ENCODE measurements at regions of chr10 and their contacts with region 1.

Region 1: GRCh38 chr10:102225646-102226541 is at the start of gene ELOVL3:
- DNase-seq: peak; percentile 96
- ATAC-seq: peak; percentile 92
- H3K4me3 Mint-ChIP-seq: peak within 1 kb of the TSS; percentile 56
- H3K27ac Mint-ChIP-seq: no peak within 1 kb of the TSS
- H3K4me1 Mint-ChIP-seq: peaks cover 8% of the 10 kb centered on the region; the same call in 1 of the 2 replicates
- H3K27me3 Mint-ChIP-seq: peaks cover 96% of the 10 kb centered on the region
- CTCF ChIP-seq: no peak
- total RNA-seq, gene ELOVL3: 0.17 to 0.46 TPM (median 0.34 TPM) in 3 replicates

Region 2: DNA sequence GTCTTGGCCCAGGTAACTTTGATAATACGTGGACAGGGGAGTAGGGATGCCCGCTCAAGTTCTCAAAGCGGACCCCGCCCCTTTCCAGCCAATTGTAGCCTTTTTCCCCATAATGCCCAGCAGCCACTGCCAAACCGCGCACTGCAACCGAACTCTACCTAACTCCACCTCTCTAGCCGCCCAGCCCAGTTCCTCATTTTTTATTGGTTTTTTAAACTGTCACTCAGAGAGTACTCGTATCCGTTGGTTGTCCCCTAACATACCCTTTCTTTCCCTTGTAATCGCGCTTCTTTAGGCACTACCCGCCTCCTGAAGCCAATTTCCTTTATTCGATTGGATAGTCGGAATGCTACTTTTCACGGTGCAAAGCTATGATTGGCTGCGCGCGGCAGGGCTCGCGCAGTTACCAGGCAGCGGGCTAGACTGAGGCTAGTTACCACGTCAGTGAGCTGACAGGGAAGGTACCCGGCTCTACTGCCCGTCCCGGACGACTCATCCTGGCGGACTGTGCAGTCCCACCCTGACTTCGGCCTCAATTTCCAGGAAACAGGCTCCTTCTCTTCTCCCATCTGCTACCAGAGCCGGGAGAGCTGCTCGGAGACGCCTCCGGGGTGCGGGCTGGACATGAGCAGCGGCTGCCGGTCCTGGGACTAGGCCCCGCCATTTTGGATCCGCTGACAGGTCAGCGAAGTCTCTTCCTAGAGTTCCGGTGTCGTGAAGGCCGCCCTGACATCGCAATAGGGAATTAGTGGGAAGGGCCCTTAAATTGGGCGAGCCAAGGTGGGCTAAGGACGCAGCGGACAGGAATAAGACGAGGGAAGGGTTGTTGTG is 19.4 kb after region 1 on chr10 and contains the start of gene GBF1:
- CTCF ChIA-PET with region 1: interaction called, 130 read pairs
- POLR2A ChIA-PET with region 1: interaction called, 7 read pairs
- DNase-seq: peak; percentile 90
- ATAC-seq: peak; percentile 93
- H3K4me3 Mint-ChIP-seq: peak within 1 kb of the TSS; percentile 100
- H3K27ac Mint-ChIP-seq: peak within 1 kb of the TSS; percentile 96
- H3K4me1 Mint-ChIP-seq: peaks cover 38% of the 10 kb centered on the region
- H3K27me3 Mint-ChIP-seq: peaks cover 45% of the 10 kb centered on the region
- CTCF ChIP-seq: no peak
- total RNA-seq, gene GBF1: 29.8 to 32.4 TPM (median 32.1 TPM) in 3 replicates

Region 3: DNA sequence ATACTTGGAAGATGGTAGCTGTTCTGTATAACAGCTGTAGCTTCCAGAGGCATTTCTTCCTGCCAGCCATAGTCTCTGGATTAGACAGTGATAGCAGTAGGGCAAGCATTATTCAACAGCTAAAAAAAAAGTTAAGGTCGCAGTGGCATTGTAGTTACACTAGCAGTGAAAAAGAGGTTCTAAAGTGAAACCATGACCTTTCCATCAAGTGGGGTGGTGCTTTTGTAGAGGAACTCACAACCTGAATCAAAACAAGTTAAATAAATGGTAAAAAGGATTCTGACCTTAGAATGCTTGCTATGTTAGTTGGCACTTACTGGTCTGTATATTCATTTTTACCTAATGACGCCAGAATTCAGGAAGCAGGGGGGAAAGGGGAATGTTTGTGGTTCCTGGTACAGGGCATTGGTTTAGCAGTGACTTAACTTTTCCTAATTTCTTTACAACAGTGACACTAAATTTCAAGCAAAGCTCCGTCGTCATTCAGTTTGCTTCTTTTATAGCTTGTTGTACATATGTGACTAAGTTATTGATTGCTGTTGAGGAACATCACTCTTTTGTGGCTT is 74.5 kb after region 1 on chr10:
- CTCF ChIA-PET with region 1: no interaction called
- POLR2A ChIA-PET with region 1: no interaction called
- DNase-seq: no peak
- ATAC-seq: no peak
- H3K4me3 Mint-ChIP-seq: no peak overlapping the region
- H3K27ac Mint-ChIP-seq: no peak overlapping the region
- H3K4me1 Mint-ChIP-seq: no peaks in the 10 kb centered on the region
- H3K27me3 Mint-ChIP-seq: no peaks in the 10 kb centered on the region
- CTCF ChIP-seq: no peak

Region 4: DNA sequence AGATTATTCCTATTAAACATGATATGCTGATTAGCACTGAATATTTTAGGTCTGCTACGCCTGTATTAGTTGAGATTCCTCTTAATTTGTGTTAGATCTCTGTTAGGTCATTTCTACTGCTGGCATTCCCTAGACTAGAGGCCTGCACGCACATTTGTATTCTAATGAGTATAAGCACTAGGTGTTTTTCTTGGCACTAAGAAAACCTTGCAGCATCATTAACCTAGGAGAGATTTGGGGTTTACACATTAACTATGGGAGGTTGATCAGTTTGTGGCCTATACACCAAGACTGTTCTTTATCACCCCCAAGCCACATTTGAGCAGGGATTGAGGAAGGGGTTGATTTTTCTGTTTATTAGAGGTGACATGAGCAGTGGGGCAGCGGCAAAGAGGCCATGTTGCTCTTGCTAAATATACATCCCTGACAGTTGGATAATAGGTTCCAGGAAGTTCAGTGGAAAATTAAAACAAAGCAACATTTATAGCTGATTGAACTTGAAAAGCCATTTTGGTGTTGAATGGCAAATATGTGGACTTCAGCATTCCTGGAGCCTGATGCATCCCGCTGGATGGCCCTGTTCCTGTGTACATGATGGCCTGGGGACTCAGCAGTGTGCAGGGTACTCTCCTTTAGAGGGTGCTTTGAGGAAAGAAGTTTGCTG is 84.6 kb after region 1 on chr10:
- CTCF ChIA-PET with region 1: interaction called, 32 read pairs
- POLR2A ChIA-PET with region 1: no interaction called
- DNase-seq: no peak
- ATAC-seq: peak; percentile 64; the same call in 1 of the 2 replicates
- H3K4me3 Mint-ChIP-seq: no peak overlapping the region
- H3K27ac Mint-ChIP-seq: no peak overlapping the region
- H3K4me1 Mint-ChIP-seq: peaks cover 11% of the 10 kb centered on the region
- H3K27me3 Mint-ChIP-seq: no peaks in the 10 kb centered on the region
- CTCF ChIP-seq: no peak

Region 5: DNA sequence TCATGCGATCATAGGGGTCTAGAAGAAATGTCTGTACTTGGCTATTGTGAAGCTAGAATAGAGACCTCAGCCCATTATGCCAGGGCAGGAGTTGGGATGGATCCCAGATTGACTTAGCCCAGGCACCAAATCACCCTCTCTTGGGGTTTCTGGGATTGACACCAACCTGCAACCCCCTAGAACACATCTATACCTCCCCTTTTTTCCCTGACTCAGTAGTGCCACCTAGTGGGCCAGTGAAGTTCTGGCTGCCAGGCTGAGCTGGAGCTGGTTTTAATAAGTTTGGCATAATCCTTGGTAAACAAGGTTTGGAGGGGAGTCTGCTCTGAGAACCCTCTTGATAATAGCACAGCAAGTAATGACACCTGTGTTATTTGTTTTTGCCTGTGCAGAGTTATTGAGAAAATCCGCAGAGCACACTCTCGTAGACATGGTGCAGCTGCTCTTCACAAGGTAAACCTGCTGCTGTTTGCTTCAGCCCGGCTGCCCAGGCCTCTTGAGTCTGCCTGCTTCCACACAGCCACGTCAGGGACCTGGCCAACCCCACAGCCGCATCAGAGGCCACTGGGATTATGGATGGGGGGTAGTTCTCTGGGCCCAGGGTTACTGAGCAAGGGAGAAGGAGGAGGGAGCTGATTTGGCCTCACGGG is 126.3 kb after region 1 on chr10:
- CTCF ChIA-PET with region 1: interaction called, 906 read pairs
- POLR2A ChIA-PET with region 1: interaction called, 8 read pairs
- DNase-seq: peak; percentile 84
- ATAC-seq: peak; percentile 85
- H3K4me3 Mint-ChIP-seq: no peak overlapping the region
- H3K27ac Mint-ChIP-seq: no peak overlapping the region
- H3K4me1 Mint-ChIP-seq: no peaks in the 10 kb centered on the region
- H3K27me3 Mint-ChIP-seq: peaks cover 8% of the 10 kb centered on the region
- CTCF ChIP-seq: peak; percentile 94

Region 6: GRCh38 chr10:102384053-102384452 is 158.2 kb after region 1 on chr10:
- CTCF ChIA-PET with region 1: interaction called, 79 read pairs
- POLR2A ChIA-PET with region 1: interaction called, 4 read pairs
- DNase-seq: peak; percentile 72
- ATAC-seq: peak; percentile 93
- H3K4me3 Mint-ChIP-seq: no peak overlapping the region
- H3K27ac Mint-ChIP-seq: no peak overlapping the region
- H3K4me1 Mint-ChIP-seq: no peaks in the 10 kb centered on the region
- H3K27me3 Mint-ChIP-seq: no peaks in the 10 kb centered on the region; the same call in 1 of the 2 replicates
- CTCF ChIP-seq: no peak

Region 7: GRCh38 chr10:102420810-102421644 is 195.1 kb after region 1 on chr10 and contains the start of gene FBXL15:
- CTCF ChIA-PET with region 1: interaction called, 37 read pairs
- POLR2A ChIA-PET with region 1: no interaction called
- DNase-seq: peak; percentile 98
- ATAC-seq: peak; percentile 58
- H3K4me3 Mint-ChIP-seq: peak within 1 kb of the TSS; percentile 98
- H3K27ac Mint-ChIP-seq: peak within 1 kb of the TSS; percentile 99
- H3K4me1 Mint-ChIP-seq: peaks cover 19% of the 10 kb centered on the region
- H3K27me3 Mint-ChIP-seq: peaks cover 5% of the 10 kb centered on the region; the same call in 1 of the 2 replicates
- CTCF ChIP-seq: no peak
- total RNA-seq, gene FBXL15: 21.6 to 24.6 TPM (median 23.2 TPM) in 3 replicates

Measured in WTC11 (cell line).